Prostate gland (tissue), 2 donors: ENCODE measurements at regions of chr5 and their contacts with region 1.

Region 1: DNA sequence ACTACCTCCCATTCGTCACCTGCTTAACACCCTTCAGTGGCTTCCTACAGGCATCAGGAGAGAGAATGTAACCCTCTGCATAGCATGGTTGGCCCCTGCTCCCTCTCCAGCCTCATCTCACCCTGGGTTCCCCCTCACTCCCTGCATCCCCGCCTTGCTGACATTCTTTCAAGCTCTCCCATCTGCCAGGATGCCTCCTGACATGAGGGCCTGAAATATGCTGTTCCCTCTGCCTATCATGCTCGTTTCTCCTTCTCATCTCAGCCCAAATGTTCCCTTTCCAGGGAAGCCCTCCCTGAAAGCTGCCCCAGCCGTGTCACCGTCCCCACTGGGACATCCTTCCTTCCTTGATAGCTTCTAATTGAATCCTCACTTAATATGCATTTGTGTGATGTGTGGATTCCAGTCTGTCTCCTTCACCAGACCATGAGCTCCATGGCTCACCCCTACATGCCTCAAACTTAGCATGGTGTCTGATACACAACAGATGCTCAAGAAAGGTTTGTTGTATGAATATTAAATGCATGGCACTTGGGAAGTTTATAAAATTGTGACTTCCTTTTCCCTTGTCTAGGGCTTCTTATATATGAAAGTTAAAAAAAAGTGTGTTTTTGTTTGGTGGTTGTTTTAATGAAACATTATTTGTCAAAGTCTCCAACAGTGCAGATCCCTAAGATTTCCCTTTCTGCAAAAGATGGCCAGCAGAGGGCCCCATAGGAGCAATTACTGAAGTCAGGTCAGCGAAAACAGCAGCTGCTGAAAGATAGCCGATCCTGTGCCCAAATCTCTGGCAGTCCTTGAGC is 7.3 kb upstream of the C5orf58 start:
- DNase-seq: peak; percentile 63
- H3K4me3 ChIP-seq: no peak overlapping the region
- H3K27ac ChIP-seq: no peak overlapping the region
- H3K4me1 ChIP-seq: no peaks in the 10 kb centered on the region
- H3K27me3 ChIP-seq: no peaks in the 10 kb centered on the region
- CTCF ChIP-seq: peak; percentile 38 to 78 (median 70)
- POLR2A ChIP-seq: no peak

Region 2: GRCh38 chr5:170338933-170339779 is 113.6 kb after region 1 on chr5:
- intact Hi-C with region 1: loop called (anchors 5 kb)
- DNase-seq: no peak
- H3K4me3 ChIP-seq: no peak overlapping the region
- H3K27ac ChIP-seq: no peak overlapping the region
- H3K4me1 ChIP-seq: no peaks in the 10 kb centered on the region
- H3K27me3 ChIP-seq: no peaks in the 10 kb centered on the region
- CTCF ChIP-seq: peak in 2 of 4 experiments; percentile 9 to 34
- POLR2A ChIP-seq: no peak

Region 3: DNA sequence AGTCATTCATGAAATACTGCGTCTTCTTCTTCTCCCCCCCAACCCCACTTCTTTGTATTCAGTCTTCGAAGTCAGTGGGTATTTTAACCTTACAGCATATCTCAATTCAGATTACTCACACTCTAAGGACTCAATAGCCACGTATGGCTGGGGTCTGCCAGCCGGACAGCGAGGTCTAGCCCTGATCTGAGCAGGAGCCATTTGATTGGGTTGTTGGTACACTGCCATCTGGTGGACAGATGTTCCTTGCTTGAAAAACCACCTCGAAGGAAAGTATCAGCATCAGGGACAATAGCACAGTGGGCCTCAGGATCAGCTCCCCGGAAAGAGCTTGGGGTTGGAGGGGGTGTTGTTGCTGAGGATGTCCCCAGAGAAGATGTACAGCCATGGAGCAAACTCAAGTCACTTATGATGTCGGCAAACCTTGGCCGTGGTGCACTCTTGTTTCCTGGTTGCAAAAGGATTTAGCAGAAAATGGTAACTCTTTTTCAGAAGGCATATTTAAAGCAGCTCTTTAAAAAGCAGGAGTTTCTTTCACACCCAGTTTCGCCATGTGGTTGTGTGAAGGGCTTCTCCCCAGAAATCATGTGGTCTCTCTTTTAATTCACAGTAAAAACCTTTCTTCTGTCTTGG is 195.4 kb after region 1 on chr5:
- intact Hi-C with region 1: loop called (anchors 2 kb)
- DNase-seq: peak; percentile 63
- H3K4me3 ChIP-seq: no peak overlapping the region
- H3K27ac ChIP-seq: no peak overlapping the region
- H3K4me1 ChIP-seq: no peaks in the 10 kb centered on the region
- H3K27me3 ChIP-seq: peaks cover 2% of the 10 kb centered on the region
- CTCF ChIP-seq: peak; percentile 68 to 82 (median 70)
- POLR2A ChIP-seq: no peak

Region 4: GRCh38 chr5:170633235-170634081 is 407.9 kb after region 1 on chr5:
- intact Hi-C with region 1: loop called (anchors 5 kb)
- DNase-seq: peak; percentile 67
- H3K4me3 ChIP-seq: peak overlapping the region in 1 of 2 donors; percentile 2
- H3K27ac ChIP-seq: peak overlapping the region; percentile 46 to 55
- H3K4me1 ChIP-seq: no peaks in the 10 kb centered on the region
- H3K27me3 ChIP-seq: no peaks in the 10 kb centered on the region
- CTCF ChIP-seq: peak in 1 of 4 experiments; percentile 9
- POLR2A ChIP-seq: no peak